ENCODE measurements at regions of chr15 and their contacts with region 1.

Region 1: GRCh38 chr15:92097474-92098178 is 244.1 kb downstream of the SLCO3A1 start:
- DNase-seq: peak; percentile 74
- H3K4me3 Mint-ChIP-seq: no peak overlapping the region
- H3K27ac Mint-ChIP-seq: peak overlapping the region; percentile 42
- H3K4me1 Mint-ChIP-seq: peaks cover 39% of the 10 kb centered on the region
- H3K27me3 Mint-ChIP-seq: no peaks in the 10 kb centered on the region

Region 2: DNA sequence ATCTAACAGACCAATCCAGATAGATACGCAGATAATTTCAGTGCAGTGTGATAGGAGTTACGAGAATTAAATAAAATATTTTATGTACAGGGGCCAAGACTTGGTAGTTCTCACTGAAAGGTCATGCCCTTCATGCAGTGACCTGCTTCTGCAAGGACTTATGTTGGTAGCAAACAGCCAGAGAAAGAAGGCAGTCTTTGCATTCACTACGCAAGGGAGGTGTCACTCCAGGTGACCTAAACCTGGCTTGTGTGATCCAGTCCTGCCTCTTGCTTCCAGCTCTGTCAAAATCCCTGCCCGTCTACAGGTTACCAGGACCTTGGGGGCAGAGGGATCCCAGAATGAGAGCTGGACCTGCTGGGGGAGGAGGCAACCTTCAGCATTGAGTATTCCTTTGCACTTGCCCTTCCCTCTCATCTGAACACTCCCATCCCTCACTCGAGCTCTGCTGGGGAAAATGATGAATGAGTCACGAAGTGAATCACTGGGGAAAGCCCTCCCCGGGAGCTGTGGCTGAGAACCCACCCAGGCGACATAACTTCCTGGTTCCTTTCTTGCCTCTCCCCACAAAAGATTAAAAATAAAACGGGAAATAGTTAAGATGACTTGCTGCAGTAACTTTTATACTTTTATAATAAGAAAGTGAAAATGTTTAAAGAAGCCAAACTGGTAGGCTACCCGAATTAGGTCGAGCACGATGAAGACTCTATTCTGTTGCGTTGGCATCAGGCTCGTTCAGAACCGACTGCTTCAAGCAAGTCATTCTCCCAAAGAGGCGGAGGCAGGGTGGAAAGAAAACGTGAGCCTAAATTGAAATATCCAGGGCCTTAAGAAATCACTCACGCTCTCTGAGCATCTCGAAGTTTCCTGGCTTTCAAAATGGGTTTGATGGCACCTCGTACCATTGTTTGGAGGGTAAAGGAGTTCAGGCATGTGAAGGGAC is 28.0 kb before region 1 on chr15:
- CTCF ChIA-PET with region 1: no interaction called
- intact Hi-C with region 1: no loop called
- DNase-seq: peak; percentile 78
- H3K4me3 Mint-ChIP-seq: peak overlapping the region; percentile 52
- H3K27ac Mint-ChIP-seq: peak overlapping the region; percentile 73
- H3K4me1 Mint-ChIP-seq: peaks cover 47% of the 10 kb centered on the region
- H3K27me3 Mint-ChIP-seq: no peaks in the 10 kb centered on the region

Region 3: DNA sequence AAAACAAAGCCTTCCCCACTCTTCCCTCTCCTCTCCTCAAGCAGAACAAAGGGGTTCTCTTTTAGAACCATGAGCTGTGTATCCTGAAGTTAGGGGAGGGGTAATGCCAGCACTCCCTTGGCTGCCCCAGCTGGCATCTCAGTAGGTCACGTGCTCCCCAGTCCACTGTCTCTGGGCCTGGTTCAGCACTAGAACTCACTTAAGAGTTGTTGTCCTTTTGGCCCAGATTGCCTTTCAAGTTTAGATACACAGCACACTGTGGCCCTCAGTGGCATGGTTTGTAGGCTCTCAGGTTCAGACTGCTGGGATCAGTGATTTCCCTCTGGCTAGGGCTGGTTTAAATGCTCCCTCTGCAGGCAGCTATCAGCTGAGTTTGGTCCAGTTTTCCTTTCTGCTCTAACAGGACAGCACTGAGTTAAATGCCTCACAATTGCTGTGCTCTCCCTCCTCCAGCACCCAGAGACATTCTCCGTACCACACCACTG is 107.7 kb after region 1 on chr15:
- CTCF ChIA-PET with region 1: no interaction called
- intact Hi-C with region 1: loop called (anchors 5 kb)
- DNase-seq: peak; percentile 10
- H3K4me3 Mint-ChIP-seq: no peak overlapping the region
- H3K27ac Mint-ChIP-seq: no peak overlapping the region
- H3K4me1 Mint-ChIP-seq: no peaks in the 10 kb centered on the region
- H3K27me3 Mint-ChIP-seq: peaks cover 22% of the 10 kb centered on the region

Region 4: GRCh38 chr15:92277776-92278175 is 180.2 kb after region 1 on chr15:
- CTCF ChIA-PET with region 1: no interaction called
- intact Hi-C with region 1: loop called (anchors 2 kb)
- DNase-seq: peak; percentile 30
- H3K4me3 Mint-ChIP-seq: no peak overlapping the region
- H3K27ac Mint-ChIP-seq: no peak overlapping the region
- H3K4me1 Mint-ChIP-seq: no peaks in the 10 kb centered on the region
- H3K27me3 Mint-ChIP-seq: peaks cover 10% of the 10 kb centered on the region

Region 5: GRCh38 chr15:92521624-92522008 is 424.0 kb after region 1 on chr15:
- CTCF ChIA-PET with region 1: no interaction called
- intact Hi-C with region 1: loop called (anchors 10 kb)
- DNase-seq: peak; percentile 80
- H3K4me3 Mint-ChIP-seq: no peak overlapping the region
- H3K27ac Mint-ChIP-seq: no peak overlapping the region
- H3K4me1 Mint-ChIP-seq: peaks cover 1% of the 10 kb centered on the region
- H3K27me3 Mint-ChIP-seq: peaks cover under 1% of the 10 kb centered on the region

Measured in activated naive CD4-positive, alpha-beta T cell treated with anti-CD3 and anti-CD28 coated beads for 36 hours (primary cell).